ENCODE measurements at regions of chr3 and their contacts with region 1.

Region 1: GRCh38 chr3:128051837-128052594 is at the start of gene SEC61A1:
- DNase-seq: peak; percentile 96
- H3K4me3 Mint-ChIP-seq: peak within 1 kb of the TSS; percentile 99
- H3K27ac Mint-ChIP-seq: peak within 1 kb of the TSS; percentile 97
- H3K4me1 Mint-ChIP-seq: peaks cover 45% of the 10 kb centered on the region
- H3K27me3 Mint-ChIP-seq: peaks cover 10% of the 10 kb centered on the region
- total RNA-seq, gene SEC61A1: 194 to 203 TPM

Region 2: GRCh38 chr3:128062033-128062745 is 10.2 kb after region 1 on chr3:
- CTCF ChIA-PET with region 1: interaction called, 12 read pairs
- POLR2A ChIA-PET with region 1: interaction called, 32 read pairs
- DNase-seq: no peak
- H3K4me3 Mint-ChIP-seq: no peak overlapping the region
- H3K27ac Mint-ChIP-seq: peak overlapping the region; percentile 5
- H3K4me1 Mint-ChIP-seq: peaks cover 6% of the 10 kb centered on the region
- H3K27me3 Mint-ChIP-seq: no peaks in the 10 kb centered on the region

Region 3: DNA sequence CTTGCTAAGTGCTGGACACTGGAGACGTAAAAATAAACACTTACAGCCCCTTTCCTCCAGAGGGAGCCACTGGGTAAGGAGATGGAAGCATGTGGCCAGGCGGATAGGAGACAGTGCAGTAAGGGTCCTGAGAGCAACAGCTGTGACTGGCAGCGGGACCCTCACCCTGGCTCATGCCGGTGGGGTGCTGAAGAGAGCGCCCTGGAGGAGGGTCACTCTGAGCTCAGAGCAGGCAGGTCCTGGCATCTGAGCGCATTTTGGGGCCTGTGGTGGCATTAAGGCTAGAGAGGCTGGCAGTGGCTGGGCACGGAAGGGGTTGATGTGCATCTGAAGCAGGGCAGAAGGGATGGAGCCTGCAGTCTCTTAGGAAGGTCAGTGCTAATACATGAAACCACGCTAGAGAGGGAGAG is 16.2 kb after region 1 on chr3:
- CTCF ChIA-PET with region 1: interaction called, 12 read pairs
- POLR2A ChIA-PET with region 1: interaction called, 32 read pairs
- DNase-seq: no peak
- H3K4me3 Mint-ChIP-seq: no peak overlapping the region
- H3K27ac Mint-ChIP-seq: no peak overlapping the region
- H3K4me1 Mint-ChIP-seq: no peaks in the 10 kb centered on the region
- H3K27me3 Mint-ChIP-seq: no peaks in the 10 kb centered on the region

Region 4: GRCh38 chr3:128153156-128154041 is 101.4 kb after region 1 on chr3 and contains the start of gene EEFSEC:
- CTCF ChIA-PET with region 1: no interaction called
- POLR2A ChIA-PET with region 1: interaction called, 10 read pairs
- DNase-seq: peak; percentile 86
- H3K4me3 Mint-ChIP-seq: peak within 1 kb of the TSS; percentile 93
- H3K27ac Mint-ChIP-seq: peak within 1 kb of the TSS; percentile 70
- H3K4me1 Mint-ChIP-seq: peaks cover 16% of the 10 kb centered on the region
- H3K27me3 Mint-ChIP-seq: no peaks in the 10 kb centered on the region
- total RNA-seq, gene EEFSEC: 14.5 to 15.0 TPM

Region 5: GRCh38 chr3:128170805-128171516 is 118.9 kb after region 1 on chr3:
- CTCF ChIA-PET with region 1: no interaction called
- POLR2A ChIA-PET with region 1: no interaction called
- DNase-seq: no peak
- H3K4me3 Mint-ChIP-seq: no peak overlapping the region
- H3K27ac Mint-ChIP-seq: no peak overlapping the region
- H3K4me1 Mint-ChIP-seq: peaks cover 3% of the 10 kb centered on the region
- H3K27me3 Mint-ChIP-seq: no peaks in the 10 kb centered on the region

Measured in activated CD4-positive, alpha-beta memory T cell treated with anti-CD3 and anti-CD28 coated beads, Interleukin-2, amount 10 ng/mL, durations not matched to agents 7 days and 5 days (primary cell).